ENCODE measurements at regions of chr11 and their contacts with region 1.

Region 1: GRCh38 chr11:88552377-88553062 is 215.0 kb upstream of the CTSC start:
- DNase-seq: peak; percentile 4 to 57 (median 28)
- H3K4me3 ChIP-seq: no peak overlapping the region
- H3K4me3 Mint-ChIP-seq: no peak overlapping the region
- H3K27ac ChIP-seq: no peak overlapping the region
- H3K27ac Mint-ChIP-seq: peak overlapping the region in 1 of 8 donors; percentile 39
- H3K4me1 ChIP-seq: no peaks in the 10 kb centered on the region
- H3K4me1 Mint-ChIP-seq: no peaks in the 10 kb centered on the region
- H3K27me3 ChIP-seq: no peaks in the 10 kb centered on the region
- H3K27me3 Mint-ChIP-seq: peaks cover 9 to 27% of the 10 kb centered on the region in 2 donors

Region 2: DNA sequence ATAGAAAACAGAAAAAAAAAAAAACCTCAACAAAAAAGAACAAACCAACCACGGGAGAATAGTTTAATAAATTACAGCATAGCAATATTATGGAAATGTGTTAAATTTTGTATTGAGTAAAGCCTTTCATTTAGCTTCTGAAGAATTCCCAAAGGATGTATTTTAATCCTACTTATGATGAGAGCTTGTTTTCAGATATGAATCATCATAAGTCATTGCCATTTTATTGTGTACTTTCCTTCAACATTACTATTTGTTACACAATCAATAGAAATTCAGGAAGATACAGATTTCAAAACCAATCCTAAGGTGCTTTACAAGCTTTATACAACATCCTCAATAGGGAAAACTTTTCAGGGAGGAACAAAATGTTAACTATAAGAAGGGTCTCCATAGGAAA is 14.4 kb before region 1 on chr11:
- CTCF ChIA-PET with region 1: interaction called, 10 read pairs
- POLR2A ChIA-PET with region 1: no interaction called
- DNase-seq: no peak
- H3K4me3 ChIP-seq: no peak overlapping the region
- H3K4me3 Mint-ChIP-seq: no peak overlapping the region
- H3K27ac ChIP-seq: no peak overlapping the region
- H3K27ac Mint-ChIP-seq: no peak overlapping the region
- H3K4me1 ChIP-seq: no peaks in the 10 kb centered on the region
- H3K4me1 Mint-ChIP-seq: no peaks in the 10 kb centered on the region
- H3K27me3 ChIP-seq: no peaks in the 10 kb centered on the region
- H3K27me3 Mint-ChIP-seq: peaks cover 0 to 2% of the 10 kb centered on the region in 2 donors

Region 3: GRCh38 chr11:88579466-88579865 is 26.9 kb after region 1 on chr11:
- CTCF ChIA-PET with region 1: no interaction called
- POLR2A ChIA-PET with region 1: no interaction called
- DNase-seq: no peak
- H3K4me3 ChIP-seq: no peak overlapping the region
- H3K4me3 Mint-ChIP-seq: no peak overlapping the region
- H3K27ac ChIP-seq: no peak overlapping the region
- H3K27ac Mint-ChIP-seq: no peak overlapping the region
- H3K4me1 ChIP-seq: no peaks in the 10 kb centered on the region
- H3K4me1 Mint-ChIP-seq: no peaks in the 10 kb centered on the region
- H3K27me3 ChIP-seq: no peaks in the 10 kb centered on the region
- H3K27me3 Mint-ChIP-seq: peaks cover 20 to 24% of the 10 kb centered on the region in 2 donors